Activated CD4-positive, alpha-beta memory T cell treated with anti-CD3 and anti-CD28 coated beads, Interleukin-2, amount 10 ng/mL, durations not matched to agents 7 days and 5 days (primary cell): ENCODE measurements at regions of chr9 and their contacts with region 1.

Region 1: GRCh38 chr9:137046098-137046787 is at the start of gene NPDC1:
- DNase-seq: peak; percentile 86
- H3K4me3 Mint-ChIP-seq: peak within 1 kb of the TSS; percentile 76
- H3K27ac Mint-ChIP-seq: peak within 1 kb of the TSS; percentile 65
- H3K4me1 Mint-ChIP-seq: peaks cover 29% of the 10 kb centered on the region
- H3K27me3 Mint-ChIP-seq: peaks cover 33% of the 10 kb centered on the region
- total RNA-seq, gene NPDC1: 82.8 to 89.2 TPM

Region 2: GRCh38 chr9:137064027-137064879 is 18.0 kb after region 1 on chr9:
- CTCF ChIA-PET with region 1: interaction called, 69 read pairs
- POLR2A ChIA-PET with region 1: interaction called, 5 read pairs
- DNase-seq: peak; percentile 63
- H3K4me3 Mint-ChIP-seq: no peak overlapping the region
- H3K27ac Mint-ChIP-seq: no peak overlapping the region
- H3K4me1 Mint-ChIP-seq: peaks cover 19% of the 10 kb centered on the region
- H3K27me3 Mint-ChIP-seq: no peaks in the 10 kb centered on the region

Region 3: GRCh38 chr9:137070201-137070905 is 24.1 kb after region 1 on chr9 and contains the start of gene SAPCD2:
- CTCF ChIA-PET with region 1: interaction called, 69 read pairs
- POLR2A ChIA-PET with region 1: interaction called, 5 read pairs
- DNase-seq: peak; percentile 90
- H3K4me3 Mint-ChIP-seq: peak within 1 kb of the TSS; percentile 73
- H3K27ac Mint-ChIP-seq: peak within 1 kb of the TSS; percentile 63
- H3K4me1 Mint-ChIP-seq: peaks cover 37% of the 10 kb centered on the region
- H3K27me3 Mint-ChIP-seq: no peaks in the 10 kb centered on the region
- total RNA-seq, gene SAPCD2: 26.8 to 27.0 TPM

Region 4: DNA sequence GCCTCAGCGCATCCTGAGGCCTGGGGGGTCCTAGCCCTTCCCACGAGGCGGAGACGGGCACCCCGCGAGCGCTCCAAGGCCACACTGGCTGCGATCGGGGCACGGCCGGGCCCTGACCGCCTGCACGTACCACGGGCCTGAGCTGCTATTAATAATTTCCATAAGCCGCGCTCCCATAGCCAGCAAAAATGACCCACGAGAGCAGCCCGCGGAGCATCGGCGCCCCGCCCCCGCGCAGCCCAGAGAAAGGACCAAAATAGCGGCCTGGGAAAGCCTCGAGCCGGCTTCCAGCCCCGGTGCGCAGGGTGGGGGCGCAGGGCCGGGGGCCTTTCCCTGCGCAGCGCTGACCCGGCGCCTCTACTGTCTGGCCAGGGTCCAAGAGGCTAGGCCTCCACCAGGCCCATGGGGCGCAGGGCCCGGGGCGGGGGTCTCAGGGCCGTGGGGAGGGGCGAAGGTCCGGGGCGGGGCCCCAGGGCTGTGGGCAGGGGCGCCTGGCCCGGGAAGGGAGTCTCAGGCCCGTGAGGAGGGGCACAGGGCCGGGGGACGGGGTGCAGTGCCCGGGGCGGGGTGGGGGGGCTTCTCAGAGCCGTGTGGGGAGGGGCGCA is 322.3 kb after region 1 on chr9:
- CTCF ChIA-PET with region 1: no interaction called
- POLR2A ChIA-PET with region 1: no interaction called
- DNase-seq: no peak
- H3K4me3 Mint-ChIP-seq: no peak overlapping the region
- H3K27ac Mint-ChIP-seq: no peak overlapping the region
- H3K4me1 Mint-ChIP-seq: no peaks in the 10 kb centered on the region
- H3K27me3 Mint-ChIP-seq: no peaks in the 10 kb centered on the region